Activated CD4-positive, alpha-beta T cell treated with anti-CD3 and anti-CD28 coated beads, Interleukin-2, amount 10 ng/mL, durations not matched to agents 24 days and 14 days (primary cell): ENCODE measurements at regions of chr20 and their contacts with region 1.

Region 1: GRCh38 chr20:20452254-20452676 is 84.4 kb downstream of the INSM1 start:
- DNase-seq: peak; percentile 86
- H3K4me3 Mint-ChIP-seq: peak overlapping the region; percentile 81
- H3K27ac Mint-ChIP-seq: peak overlapping the region; percentile 85
- H3K4me1 Mint-ChIP-seq: peaks cover 32% of the 10 kb centered on the region
- H3K27me3 Mint-ChIP-seq: no peaks in the 10 kb centered on the region

Region 2: DNA sequence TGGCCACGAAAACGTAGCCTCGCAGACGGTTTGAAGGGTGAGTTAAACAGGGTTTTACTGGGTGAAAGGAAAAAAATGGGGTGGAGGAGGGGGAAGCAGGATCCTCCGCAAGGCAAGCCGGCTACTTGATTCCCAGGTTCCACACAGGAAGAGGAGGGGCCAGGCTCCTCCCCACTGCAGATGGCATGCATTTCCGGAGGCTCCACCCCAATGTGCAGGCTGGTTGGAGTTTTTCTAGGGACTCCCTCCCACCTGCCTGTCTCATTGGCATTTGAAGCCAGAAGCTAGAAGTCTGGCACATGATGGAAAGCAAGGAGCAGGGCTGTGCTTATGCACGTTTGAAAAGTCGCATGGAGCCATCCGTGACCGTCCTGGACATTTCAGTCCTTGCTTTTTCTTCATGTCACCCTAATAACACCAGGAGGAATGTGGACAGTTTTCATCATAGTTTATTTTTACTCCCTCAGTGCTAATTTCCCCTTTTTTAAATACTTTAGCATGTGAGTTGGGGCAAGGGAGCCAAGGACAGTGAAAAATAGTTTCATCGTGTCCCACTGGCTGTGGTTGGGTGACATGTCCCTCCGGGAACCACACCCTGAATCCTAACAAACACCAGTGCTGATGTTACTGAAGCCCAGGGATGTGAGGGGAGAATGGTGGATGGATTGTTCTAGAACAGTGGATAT is 184.4 kb before region 1 on chr20:
- intact Hi-C with region 1: no loop called
- DNase-seq: no peak
- H3K4me3 Mint-ChIP-seq: no peak overlapping the region
- H3K27ac Mint-ChIP-seq: no peak overlapping the region
- H3K4me1 Mint-ChIP-seq: no peaks in the 10 kb centered on the region
- H3K27me3 Mint-ChIP-seq: peaks cover 1% of the 10 kb centered on the region

Region 3: GRCh38 chr20:20369250-20370093 is 82.8 kb before region 1 on chr20:
- intact Hi-C with region 1: loop called (anchors 2 kb)
- DNase-seq: peak; percentile 62
- H3K4me3 Mint-ChIP-seq: peak overlapping the region; percentile 83
- H3K27ac Mint-ChIP-seq: peak overlapping the region; percentile 83
- H3K4me1 Mint-ChIP-seq: peaks cover 19% of the 10 kb centered on the region
- H3K27me3 Mint-ChIP-seq: peaks cover 56% of the 10 kb centered on the region

Region 4: DNA sequence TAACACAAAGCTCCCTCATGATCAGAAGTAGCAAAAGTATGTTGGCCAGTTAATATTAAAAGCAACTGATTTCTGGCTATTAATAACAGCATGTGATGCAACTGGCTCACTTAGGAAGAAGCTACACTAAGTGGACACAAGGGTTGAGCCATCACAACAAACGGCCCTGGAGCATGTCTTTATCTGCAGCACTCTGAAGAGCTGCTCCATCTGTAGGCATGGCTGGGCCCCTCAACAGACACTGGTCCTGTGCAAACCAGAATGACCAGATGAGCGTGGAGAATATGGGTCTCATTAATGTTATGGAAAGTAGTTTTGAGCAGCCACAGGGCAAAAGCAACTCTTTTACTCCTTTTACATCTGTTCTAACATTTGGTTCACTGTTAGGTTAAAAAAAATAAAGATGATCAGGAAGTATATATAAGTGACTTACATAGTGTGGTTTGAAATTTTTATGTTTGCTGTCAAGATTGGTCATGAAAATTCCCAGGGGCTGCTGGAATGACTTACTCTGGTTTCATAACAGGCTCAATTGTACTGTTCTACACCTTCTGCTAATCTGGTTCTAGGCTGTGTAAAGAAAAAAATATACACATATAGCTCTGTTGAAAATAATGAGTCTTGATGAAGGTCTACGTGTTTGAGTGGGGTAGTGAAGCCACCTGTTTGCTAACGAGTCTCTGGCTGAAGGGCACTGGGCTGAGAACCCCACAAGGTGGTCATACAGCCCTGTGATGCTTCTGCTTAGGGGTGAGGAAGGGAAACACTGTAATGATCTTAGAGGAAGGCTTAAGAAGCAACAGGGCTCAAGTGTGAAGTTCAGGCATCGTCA is 26.2 kb before region 1 on chr20:
- intact Hi-C with region 1: loop called (anchors 2 kb)
- DNase-seq: no peak
- H3K4me3 Mint-ChIP-seq: peak overlapping the region; percentile 10
- H3K27ac Mint-ChIP-seq: peak overlapping the region; percentile 89
- H3K4me1 Mint-ChIP-seq: peaks cover 40% of the 10 kb centered on the region
- H3K27me3 Mint-ChIP-seq: no peaks in the 10 kb centered on the region